ENCODE measurements at regions of chr7 and their contacts with region 1.

Region 1: DNA sequence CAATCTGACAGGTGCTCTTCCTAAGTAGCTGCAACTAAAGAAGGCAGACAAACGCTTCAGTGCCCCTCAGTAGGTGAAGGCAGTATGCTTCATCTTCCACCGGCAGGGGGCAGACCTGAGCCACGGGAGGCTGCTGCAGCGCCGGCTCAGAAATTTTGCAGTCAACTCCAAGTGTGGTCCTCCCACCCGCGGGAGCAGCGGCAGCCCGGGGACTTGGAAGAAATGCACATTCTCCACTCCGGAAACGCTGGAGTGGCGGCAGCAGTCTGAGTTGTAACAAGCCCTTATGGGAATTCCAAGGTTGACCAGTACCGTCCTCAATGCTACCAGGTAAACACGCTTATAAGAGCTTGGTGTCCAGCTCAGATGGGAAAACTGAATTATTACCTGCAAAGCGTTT is 3.4 kb downstream of the IGFBP3 start:
- DNase-seq: peak; percentile 59 to 84 (median 75)
- H3K4me3 ChIP-seq: no peak overlapping the region
- H3K27ac ChIP-seq: no peak overlapping the region
- H3K4me1 ChIP-seq: peaks cover 0 to 4% of the 10 kb centered on the region in 2 donors
- H3K27me3 ChIP-seq: peaks cover 43% of the 10 kb centered on the region
- CTCF ChIP-seq: peak; percentile 67 to 98 (median 84)
- POLR2A ChIP-seq: no peak

Region 2: DNA sequence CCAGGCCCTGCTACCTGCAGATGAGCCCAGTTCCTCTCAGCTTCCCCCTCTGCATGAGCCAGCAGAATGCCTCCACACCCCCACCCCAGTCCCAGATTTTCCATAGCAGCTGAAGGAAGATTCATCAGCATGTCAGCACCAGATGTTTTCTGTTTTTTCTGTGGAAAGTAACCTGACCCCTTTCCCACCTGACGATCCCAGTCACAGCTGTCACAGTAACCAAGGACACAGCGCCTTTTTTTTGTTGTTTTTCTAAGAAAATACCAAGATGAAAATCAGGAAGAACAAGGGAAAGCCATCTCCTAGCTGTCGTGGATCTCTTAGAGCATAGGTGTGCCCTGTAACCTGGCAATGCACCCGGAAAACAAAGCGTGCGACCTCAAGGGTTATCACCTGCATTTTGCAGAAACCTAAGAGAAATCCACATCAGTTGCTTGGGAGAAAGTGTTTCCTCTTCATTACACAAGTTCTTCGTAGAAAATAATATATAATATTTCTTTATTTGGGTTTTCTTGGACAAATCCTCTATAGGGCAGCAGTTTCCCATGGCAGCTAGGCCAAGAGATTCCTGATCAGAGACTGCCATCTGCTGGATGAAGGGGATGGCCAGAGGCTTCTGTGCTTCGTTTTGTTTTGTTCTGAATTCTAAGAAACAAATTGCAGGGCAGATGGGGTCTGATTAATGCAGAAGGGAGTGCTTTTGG is 1262.3 kb after region 1 on chr7:
- intact Hi-C with region 1: loop called (anchors 2 to 5 kb)
- DNase-seq: peak; percentile 43 to 77 (median 56)
- H3K4me3 ChIP-seq: no peak overlapping the region
- H3K27ac ChIP-seq: no peak overlapping the region
- H3K4me1 ChIP-seq: no peaks in the 10 kb centered on the region
- H3K27me3 ChIP-seq: no peaks in the 10 kb centered on the region
- CTCF ChIP-seq: peak; percentile 63 to 80 (median 72)
- POLR2A ChIP-seq: peak in 1 of 2 donors; percentile 6

Region 3: DNA sequence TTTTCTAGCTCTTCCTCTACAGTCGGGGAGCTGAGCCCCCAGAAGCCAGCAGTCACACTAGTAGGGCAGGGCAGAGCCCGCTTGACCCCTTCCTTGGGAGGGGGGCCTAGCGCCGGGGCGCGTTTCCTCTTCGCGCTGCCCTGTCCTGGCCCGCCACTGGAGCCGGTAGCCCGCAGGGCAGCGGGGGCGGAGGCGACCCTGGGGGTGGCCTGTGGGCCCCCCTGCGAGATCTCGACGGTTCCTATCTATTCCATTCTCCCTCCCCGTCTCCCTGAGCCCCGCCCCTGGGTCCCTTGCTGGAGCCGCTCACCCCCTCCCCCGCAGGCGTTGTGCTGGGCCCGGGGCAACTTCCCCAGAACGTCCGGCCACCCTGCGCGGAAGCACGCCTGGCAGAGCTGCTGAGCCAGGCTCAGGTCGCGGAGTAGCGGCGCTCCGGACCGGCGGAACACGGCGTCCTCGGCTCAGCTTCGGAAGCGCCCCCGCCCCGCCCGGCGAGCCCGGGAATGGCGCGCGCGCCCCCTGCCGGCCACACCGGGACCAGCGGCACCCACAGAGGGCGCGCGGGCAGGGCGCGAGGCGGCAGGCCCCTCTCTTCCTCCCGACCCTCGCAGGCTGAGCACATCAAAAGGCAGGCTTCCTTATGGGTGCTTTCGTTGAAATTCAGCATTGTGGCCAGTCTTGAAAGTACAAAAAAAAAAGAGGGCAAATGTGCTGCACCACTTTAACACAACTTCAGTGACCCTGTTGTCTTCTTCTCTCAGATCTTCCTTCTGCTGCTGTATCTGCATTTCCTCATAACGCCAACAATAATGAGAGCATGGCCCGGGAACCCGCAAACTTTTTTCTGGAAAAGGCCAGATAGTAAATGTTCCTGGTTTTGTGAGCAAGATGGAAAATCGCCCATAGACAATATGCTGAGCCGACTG is 1336.7 kb after region 1 on chr7:
- intact Hi-C with region 1: loop called in 1 of 2 experiments (anchors 10 kb)
- DNase-seq: peak; percentile 75 to 89 (median 83)
- H3K4me3 ChIP-seq: peak overlapping the region in 2 of 4 donors; percentile 40 to 62
- H3K27ac ChIP-seq: peak overlapping the region in 4 of 5 donors; percentile 65 to 91 (median 80)
- H3K4me1 ChIP-seq: peaks cover 11 to 18% of the 10 kb centered on the region in 2 donors
- H3K27me3 ChIP-seq: no peaks in the 10 kb centered on the region
- CTCF ChIP-seq: peak; percentile 30 to 97 (median 65)
- POLR2A ChIP-seq: peak; percentile 28 to 42